ENCODE measurements at regions of chr14 and their contacts with region 1.

Region 1: GRCh38 chr14:69107407-69108003 is 45.4 kb downstream of the DCAF5 start:
- DNase-seq: peak; percentile 42
- ATAC-seq: peak; percentile 53
- H3K4me3 Mint-ChIP-seq: no peak overlapping the region
- H3K27ac Mint-ChIP-seq: no peak overlapping the region
- H3K4me1 Mint-ChIP-seq: peaks cover under 1% of the 10 kb centered on the region
- H3K27me3 Mint-ChIP-seq: no peaks in the 10 kb centered on the region

Region 2: GRCh38 chr14:68862954-68863594 is 244.4 kb before region 1 on chr14:
- CTCF ChIA-PET with region 1: interaction called, 27 read pairs
- DNase-seq: peak; percentile 82
- ATAC-seq: peak; percentile 36
- H3K4me3 Mint-ChIP-seq: no peak overlapping the region
- H3K27ac Mint-ChIP-seq: no peak overlapping the region
- H3K4me1 Mint-ChIP-seq: no peaks in the 10 kb centered on the region
- H3K27me3 Mint-ChIP-seq: no peaks in the 10 kb centered on the region

Region 3: GRCh38 chr14:69013943-69014775 is 93.3 kb before region 1 on chr14:
- CTCF ChIA-PET with region 1: no interaction called
- DNase-seq: no peak
- ATAC-seq: no peak
- H3K4me3 Mint-ChIP-seq: no peak overlapping the region
- H3K27ac Mint-ChIP-seq: no peak overlapping the region
- H3K4me1 Mint-ChIP-seq: peaks cover 7% of the 10 kb centered on the region
- H3K27me3 Mint-ChIP-seq: peaks cover 8% of the 10 kb centered on the region

Region 4: GRCh38 chr14:69090187-69090789 is 17.2 kb before region 1 on chr14:
- CTCF ChIA-PET with region 1: interaction called, 13 read pairs
- DNase-seq: no peak
- ATAC-seq: peak; percentile 51
- H3K4me3 Mint-ChIP-seq: no peak overlapping the region
- H3K27ac Mint-ChIP-seq: no peak overlapping the region
- H3K4me1 Mint-ChIP-seq: peaks cover 17% of the 10 kb centered on the region
- H3K27me3 Mint-ChIP-seq: no peaks in the 10 kb centered on the region

Region 5: GRCh38 chr14:69129264-69129880 is 21.9 kb after region 1 on chr14:
- CTCF ChIA-PET with region 1: interaction called, 12 read pairs
- DNase-seq: peak; percentile 82
- ATAC-seq: peak; percentile 88
- H3K4me3 Mint-ChIP-seq: no peak overlapping the region
- H3K27ac Mint-ChIP-seq: peak overlapping the region; percentile 62
- H3K4me1 Mint-ChIP-seq: peaks cover 30% of the 10 kb centered on the region
- H3K27me3 Mint-ChIP-seq: no peaks in the 10 kb centered on the region

Region 6: DNA sequence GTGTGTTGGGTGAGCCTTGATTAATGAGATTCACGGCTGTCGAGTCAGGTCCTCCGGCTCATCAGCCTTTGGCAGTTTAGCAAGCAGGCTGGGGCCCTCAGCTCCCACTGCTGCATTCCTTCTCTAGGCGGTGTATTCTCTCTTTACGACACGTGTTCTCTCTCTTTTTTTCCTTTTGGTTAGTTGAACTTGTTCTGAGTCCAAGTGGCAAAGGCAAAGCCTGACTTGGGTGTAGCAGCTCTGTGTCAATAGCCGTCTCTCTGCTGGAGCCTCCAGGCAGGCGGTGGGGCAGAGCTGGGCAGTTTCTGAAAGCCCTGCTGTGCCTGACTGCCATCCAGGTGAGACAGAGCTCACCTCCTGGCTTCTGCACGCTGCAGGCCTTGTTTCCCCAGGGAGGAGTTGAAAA is 550.4 kb after region 1 on chr14:
- CTCF ChIA-PET with region 1: no interaction called
- DNase-seq: no peak
- ATAC-seq: no peak
- H3K4me3 Mint-ChIP-seq: no peak overlapping the region
- H3K27ac Mint-ChIP-seq: peak overlapping the region; percentile 91
- H3K4me1 Mint-ChIP-seq: peaks cover 88% of the 10 kb centered on the region
- H3K27me3 Mint-ChIP-seq: no peaks in the 10 kb centered on the region

Measured in activated CD8-positive, alpha-beta memory T cell treated with anti-CD3 and anti-CD28 coated beads, Interleukin-2, amount 10 ng/mL, durations not matched to agents 7 days and 5 days (primary cell).